CD4-positive, alpha-beta T cell (primary cell): ENCODE measurements at regions of chr14 and their contacts with region 1.

Region 1: DNA sequence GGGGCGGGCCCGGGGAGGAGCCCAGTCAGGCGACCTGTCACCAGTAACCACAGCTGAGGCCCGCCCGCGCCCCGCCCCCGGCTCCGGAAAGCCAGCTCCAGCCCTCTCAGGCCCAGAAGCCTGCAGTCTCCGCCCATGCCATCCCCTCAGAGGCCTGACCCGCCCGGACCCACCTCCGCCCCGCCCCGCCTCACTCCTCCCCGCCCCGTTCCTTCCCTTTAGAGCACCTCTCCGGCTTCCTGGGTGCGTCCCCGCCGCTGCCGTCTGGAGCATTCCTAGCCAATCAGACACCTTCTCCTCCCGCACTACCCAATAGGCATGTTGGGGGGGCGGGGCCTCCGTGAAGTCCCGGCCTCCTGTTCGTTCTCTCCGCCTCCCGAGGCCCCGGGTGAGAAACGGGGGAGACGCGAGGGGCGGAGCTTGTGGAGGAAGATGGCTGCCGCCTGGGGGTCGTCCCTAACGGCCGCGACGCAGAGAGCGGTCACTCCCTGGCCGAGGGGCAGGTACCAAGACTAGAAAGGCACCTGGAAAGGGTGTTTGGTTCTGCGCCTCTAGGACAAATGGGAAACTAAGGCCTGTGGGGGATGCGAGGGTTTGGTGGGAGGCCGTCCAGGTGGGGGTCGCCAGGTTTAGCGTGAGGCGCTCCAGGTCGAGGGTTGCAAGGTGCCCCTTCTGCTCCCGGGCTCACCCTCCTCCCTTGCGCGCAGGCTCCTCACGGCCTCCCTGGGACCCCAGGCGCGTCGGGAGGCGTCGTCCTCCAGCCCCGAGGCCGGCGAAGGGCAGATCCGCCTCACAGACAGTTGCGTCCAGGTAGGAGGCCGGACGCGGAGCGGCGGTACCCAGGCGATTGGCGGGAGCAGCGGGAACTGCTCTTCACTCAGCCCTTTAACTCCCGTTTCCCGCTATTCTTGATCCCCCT is at the start of gene ISCA2:
- DNase-seq: peak; percentile 97 to 100 (median 99)
- ATAC-seq: peak; percentile 92
- H3K4me3 ChIP-seq: peak within 1 kb of the TSS; percentile 86
- H3K4me3 Mint-ChIP-seq: no peak within 1 kb of the TSS
- H3K27ac ChIP-seq: peak within 1 kb of the TSS; percentile 77 to 80
- H3K27ac Mint-ChIP-seq: no peak within 1 kb of the TSS
- H3K4me1 ChIP-seq: peaks cover 19% of the 10 kb centered on the region
- H3K4me1 Mint-ChIP-seq: peaks cover 35% of the 10 kb centered on the region
- H3K27me3 ChIP-seq: no peaks in the 10 kb centered on the region
- H3K27me3 Mint-ChIP-seq: no peaks in the 10 kb centered on the region
- CTCF ChIP-seq: no peak
- total RNA-seq, gene ISCA2: 22.5 to 23.7 TPM

Region 2: GRCh38 chr14:72926292-72927028 is 1567.1 kb before region 1 on chr14 and contains the start of gene DCAF4:
- CTCF ChIA-PET with region 1: no interaction called
- POLR2A ChIA-PET with region 1: no interaction called
- intact Hi-C with region 1: loop called in 1 of 2 experiments (anchors 10 kb)
- DNase-seq: peak in 13 of 14 experiments; percentile 87 to 97 (median 92)
- ATAC-seq: peak; percentile 95
- H3K4me3 ChIP-seq: peak within 1 kb of the TSS; percentile 81
- H3K4me3 Mint-ChIP-seq: peak within 1 kb of the TSS; percentile 97
- H3K27ac ChIP-seq: peak within 1 kb of the TSS; percentile 30 to 70
- H3K27ac Mint-ChIP-seq: peak within 1 kb of the TSS; percentile 93
- H3K4me1 ChIP-seq: peaks cover 20% of the 10 kb centered on the region
- H3K4me1 Mint-ChIP-seq: peaks cover 25% of the 10 kb centered on the region
- H3K27me3 ChIP-seq: no peaks in the 10 kb centered on the region
- H3K27me3 Mint-ChIP-seq: no peaks in the 10 kb centered on the region
- CTCF ChIP-seq: no peak
- total RNA-seq, gene DCAF4: 20.8 to 22.8 TPM

Region 3: DNA sequence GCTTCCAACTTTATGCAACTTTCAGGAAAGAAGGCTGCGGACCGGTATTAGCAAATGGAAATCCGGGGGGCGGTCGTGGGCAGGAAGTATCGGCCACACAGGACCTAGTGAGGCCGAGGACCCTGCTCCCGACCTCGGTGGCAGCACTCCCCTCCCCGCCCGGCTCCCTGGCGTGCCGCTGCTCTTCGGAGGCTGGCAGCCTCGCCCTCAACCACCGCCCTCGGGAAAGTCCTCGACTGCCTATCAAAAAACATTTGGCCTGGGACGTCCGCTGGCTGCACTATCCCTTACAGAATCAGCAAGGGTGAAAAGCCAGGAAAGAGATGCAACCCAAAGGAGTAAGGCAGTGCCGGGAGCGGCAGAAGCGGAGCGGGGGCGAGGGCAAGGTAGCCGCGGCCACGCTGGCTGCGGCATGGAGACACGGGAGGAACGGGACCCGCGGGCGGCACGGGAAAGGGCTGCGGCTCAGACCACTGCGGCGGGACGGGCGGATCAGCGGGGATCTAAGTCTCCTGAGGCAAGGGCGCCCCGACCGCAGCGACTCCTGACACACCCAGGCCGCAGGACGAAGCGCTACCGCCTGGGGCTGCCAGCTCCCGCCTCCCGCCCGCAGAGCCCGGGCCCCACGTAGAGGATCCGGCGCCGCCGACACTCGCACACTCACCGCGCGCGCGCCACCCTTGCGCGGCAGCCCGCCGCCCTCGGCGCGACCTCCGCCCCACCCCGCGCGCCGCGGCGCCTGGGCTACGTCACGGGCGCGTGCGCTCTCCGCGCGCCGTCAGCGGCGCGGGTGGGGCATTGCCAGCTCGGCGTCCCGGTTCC is 474.8 kb before region 1 on chr14 and contains the starts of genes BBOF1 and ENTPD5:
- CTCF ChIA-PET with region 1: no interaction called
- POLR2A ChIA-PET with region 1: no interaction called
- intact Hi-C with region 1: loop called in 1 of 2 experiments (anchors 5 kb)
- DNase-seq: peak; percentile 68 to 96 (median 84)
- ATAC-seq: peak; percentile 93
- H3K4me3 ChIP-seq: peak within 1 kb of the TSS; percentile 89
- H3K4me3 Mint-ChIP-seq: peak within 1 kb of the TSS; percentile 98
- H3K27ac ChIP-seq: peak within 1 kb of the TSS; percentile 75 to 87
- H3K27ac Mint-ChIP-seq: peak within 1 kb of the TSS; percentile 95
- H3K4me1 ChIP-seq: peaks cover 16% of the 10 kb centered on the region
- H3K4me1 Mint-ChIP-seq: peaks cover 22% of the 10 kb centered on the region
- H3K27me3 ChIP-seq: no peaks in the 10 kb centered on the region
- H3K27me3 Mint-ChIP-seq: no peaks in the 10 kb centered on the region
- CTCF ChIP-seq: no peak
- total RNA-seq, gene BBOF1: 1.8 to 2.4 TPM
- total RNA-seq, gene ENTPD5: 5.5 to 7.1 TPM

Region 4: DNA sequence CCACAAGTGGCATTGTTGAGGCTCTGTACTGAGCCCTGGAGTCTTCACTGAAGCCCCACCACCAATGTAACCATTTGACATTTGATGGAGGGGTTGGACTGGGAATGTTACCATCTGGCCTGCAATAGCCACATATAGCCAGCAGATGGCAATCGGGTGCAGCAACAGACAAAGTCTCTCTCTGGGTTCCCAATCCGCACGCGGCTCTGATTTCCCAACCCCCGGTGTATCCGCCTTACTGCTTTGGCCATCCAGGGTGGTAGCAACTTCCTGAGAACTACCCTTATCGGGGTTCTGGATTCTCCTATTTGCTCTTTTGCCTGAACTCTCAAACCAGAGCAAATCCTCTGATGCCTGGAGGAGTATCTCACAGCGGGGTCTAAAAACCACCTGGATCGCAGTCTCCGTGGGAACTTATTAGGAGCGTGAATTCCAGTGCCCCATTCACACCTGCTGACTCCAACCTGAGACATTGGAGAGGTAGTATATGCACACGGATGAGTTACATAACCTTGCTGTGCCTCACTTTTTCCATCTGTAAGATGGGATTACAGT is 131.2 kb before region 1 on chr14:
- CTCF ChIA-PET with region 1: no interaction called
- POLR2A ChIA-PET with region 1: no interaction called
- intact Hi-C with region 1: loop called in 1 of 2 experiments (anchors 5 kb)
- DNase-seq: peak; percentile 40 to 76 (median 54)
- ATAC-seq: peak; percentile 71
- H3K4me3 ChIP-seq: no peak overlapping the region
- H3K4me3 Mint-ChIP-seq: no peak overlapping the region
- H3K27ac ChIP-seq: no peak overlapping the region
- H3K27ac Mint-ChIP-seq: no peak overlapping the region
- H3K4me1 ChIP-seq: peaks cover 6% of the 10 kb centered on the region
- H3K4me1 Mint-ChIP-seq: no peaks in the 10 kb centered on the region
- H3K27me3 ChIP-seq: peaks cover 0 to 5% of the 10 kb centered on the region in 2 experiments
- H3K27me3 Mint-ChIP-seq: peaks cover 10% of the 10 kb centered on the region
- CTCF ChIP-seq: peak; percentile 94

Region 5: GRCh38 chr14:74762917-74763802 is 269.6 kb after region 1 on chr14 and contains the start of gene YLPM1:
- CTCF ChIA-PET with region 1: no interaction called
- POLR2A ChIA-PET with region 1: no interaction called
- intact Hi-C with region 1: loop called in 1 of 2 experiments (anchors 5 kb)
- DNase-seq: peak; percentile 85 to 98 (median 90)
- ATAC-seq: peak; percentile 89
- H3K4me3 ChIP-seq: peak within 1 kb of the TSS; percentile 84
- H3K4me3 Mint-ChIP-seq: peak within 1 kb of the TSS; percentile 88
- H3K27ac ChIP-seq: peak within 1 kb of the TSS; percentile 91 to 96
- H3K27ac Mint-ChIP-seq: peak within 1 kb of the TSS; percentile 85
- H3K4me1 ChIP-seq: peaks cover 37% of the 10 kb centered on the region
- H3K4me1 Mint-ChIP-seq: peaks cover 50% of the 10 kb centered on the region
- H3K27me3 ChIP-seq: no peaks in the 10 kb centered on the region
- H3K27me3 Mint-ChIP-seq: no peaks in the 10 kb centered on the region
- CTCF ChIP-seq: peak; percentile 54
- total RNA-seq, gene YLPM1: 87.2 to 88.6 TPM

Region 6: DNA sequence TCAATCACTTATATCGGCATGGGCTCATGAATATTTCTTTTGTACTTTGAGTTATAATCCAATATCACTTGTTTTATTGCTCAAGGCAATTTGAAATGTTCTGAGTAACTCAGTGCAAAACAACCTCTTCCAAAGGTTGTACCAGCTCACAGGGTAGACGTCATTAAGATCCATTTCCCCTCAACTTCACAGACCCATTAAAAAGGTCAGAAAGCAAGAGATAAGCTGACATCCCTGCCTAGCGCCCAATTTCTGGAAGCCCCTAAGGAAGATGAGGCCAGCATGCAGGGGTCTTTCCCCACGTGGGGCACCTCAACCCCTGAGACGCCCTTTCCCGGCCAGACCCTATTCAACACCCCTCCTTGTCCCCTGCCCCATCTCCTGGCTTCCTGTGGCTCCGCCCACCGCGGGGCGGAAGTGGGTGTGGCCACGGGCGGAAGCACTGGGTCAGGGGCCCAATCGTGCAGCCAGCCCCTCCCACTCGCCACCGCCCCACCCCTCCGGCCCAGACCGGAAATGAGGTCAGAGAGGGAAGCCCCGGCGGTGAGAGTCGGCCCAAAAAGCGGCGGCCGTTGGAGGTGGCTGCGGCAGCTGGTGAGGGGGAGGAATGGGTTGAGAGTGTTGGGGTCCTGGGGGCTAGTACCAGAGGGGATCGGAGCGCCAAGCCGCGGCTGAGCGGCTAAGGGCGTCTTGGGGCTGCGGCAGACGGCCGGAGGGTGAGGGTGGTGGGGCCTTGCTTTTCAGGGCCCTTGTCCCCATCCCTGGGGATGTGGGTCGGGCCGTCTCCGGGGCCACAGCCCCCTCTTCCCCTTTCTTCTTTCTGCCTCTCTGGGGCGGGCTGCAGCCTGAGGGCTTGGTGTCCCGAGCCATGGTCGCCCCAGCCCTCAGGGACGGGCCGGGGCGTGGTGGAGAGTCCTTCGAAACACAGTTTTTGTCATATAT is 1658.1 kb after region 1 on chr14 and contains the start of gene GPATCH2L:
- CTCF ChIA-PET with region 1: no interaction called
- POLR2A ChIA-PET with region 1: no interaction called
- intact Hi-C with region 1: loop called in 1 of 2 experiments (anchors 5 kb)
- DNase-seq: peak; percentile 93 to 99 (median 96)
- ATAC-seq: peak; percentile 85
- H3K4me3 ChIP-seq: peak within 1 kb of the TSS; percentile 97
- H3K4me3 Mint-ChIP-seq: peak within 1 kb of the TSS; percentile 96
- H3K27ac ChIP-seq: peak within 1 kb of the TSS; percentile 94 to 95
- H3K27ac Mint-ChIP-seq: peak within 1 kb of the TSS; percentile 95
- H3K4me1 ChIP-seq: peaks cover 39% of the 10 kb centered on the region
- H3K4me1 Mint-ChIP-seq: peaks cover 57% of the 10 kb centered on the region
- H3K27me3 ChIP-seq: no peaks in the 10 kb centered on the region
- H3K27me3 Mint-ChIP-seq: no peaks in the 10 kb centered on the region
- CTCF ChIP-seq: no peak
- total RNA-seq, gene GPATCH2L: 56.0 to 61.5 TPM